T-cell (primary cell): ENCODE measurements at regions of chr1 and their contacts with region 1.

Region 1: DNA sequence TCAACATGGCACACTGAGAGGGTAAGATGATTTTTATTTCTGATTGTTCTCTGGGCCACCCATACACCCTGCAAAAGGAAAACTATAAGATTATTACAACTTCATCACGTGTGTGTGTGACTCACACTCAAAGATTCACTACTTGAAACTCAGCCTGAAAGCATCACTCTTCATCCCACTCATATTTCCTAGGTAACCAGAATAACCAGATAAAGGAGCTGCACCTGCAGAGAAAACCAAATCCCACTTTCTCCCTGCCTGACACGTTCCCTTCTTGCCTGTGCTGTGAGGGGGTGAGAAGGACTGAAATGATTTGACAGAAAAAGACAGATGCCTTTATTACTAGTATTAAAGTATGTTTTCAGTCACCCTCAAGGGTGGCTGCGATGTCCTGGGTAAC is 131.6 kb downstream of the TGFBR3 start:
- DNase-seq: no peak
- ATAC-seq: peak in 1 of 4 experiments; percentile 59
- H3K4me3 ChIP-seq: no peak overlapping the region
- H3K4me3 Mint-ChIP-seq: no peak overlapping the region
- H3K27ac ChIP-seq: peak overlapping the region; percentile 28
- H3K27ac Mint-ChIP-seq: peak overlapping the region; percentile 29 to 56
- H3K4me1 ChIP-seq: peaks cover 0 to 14% of the 10 kb centered on the region in 2 experiments
- H3K4me1 Mint-ChIP-seq: peaks cover 13 to 30% (median 29%) of the 10 kb centered on the region in 3 donors
- H3K27me3 ChIP-seq: no peaks in the 10 kb centered on the region
- H3K27me3 Mint-ChIP-seq: no peaks in the 10 kb centered on the region

Region 2: GRCh38 chr1:91768787-91769725 is 14.7 kb after region 1 on chr1:
- CTCF ChIA-PET with region 1: interaction called in 1 of 2 experiments, 8 read pairs
- POLR2A ChIA-PET with region 1: interaction called in 1 of 2 experiments, 19 read pairs
- DNase-seq: no peak
- ATAC-seq: no peak
- H3K4me3 ChIP-seq: no peak overlapping the region
- H3K4me3 Mint-ChIP-seq: no peak overlapping the region
- H3K27ac ChIP-seq: no peak overlapping the region
- H3K27ac Mint-ChIP-seq: no peak overlapping the region
- H3K4me1 ChIP-seq: peaks cover 0 to 6% of the 10 kb centered on the region in 2 experiments
- H3K4me1 Mint-ChIP-seq: peaks cover 0 to 21% (median 9%) of the 10 kb centered on the region in 3 donors
- H3K27me3 ChIP-seq: no peaks in the 10 kb centered on the region
- H3K27me3 Mint-ChIP-seq: no peaks in the 10 kb centered on the region

Region 3: DNA sequence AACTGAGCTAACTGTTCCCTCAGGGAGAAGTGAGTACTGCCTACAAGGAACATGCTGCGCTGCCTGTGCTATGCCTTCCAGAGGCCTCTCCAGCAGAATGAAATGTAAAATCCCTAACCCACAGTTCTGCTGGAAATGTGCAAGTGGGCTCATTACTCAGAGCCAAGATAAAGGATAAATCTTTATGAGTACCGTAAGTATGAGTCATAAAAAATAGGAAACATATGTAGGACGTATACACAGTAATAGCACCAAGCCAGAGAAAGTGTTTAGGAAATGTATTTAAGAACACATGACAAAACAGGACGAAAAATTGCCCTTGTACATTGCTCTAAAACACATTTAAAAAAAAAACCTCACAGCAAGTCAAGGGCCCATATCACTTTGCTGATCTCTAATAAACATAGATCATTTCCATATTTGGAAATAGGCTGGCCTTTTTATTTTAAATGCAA is 27.1 kb after region 1 on chr1:
- CTCF ChIA-PET with region 1: no interaction called
- POLR2A ChIA-PET with region 1: interaction called, 10 to 15 read pairs
- DNase-seq: no peak
- ATAC-seq: no peak
- H3K4me3 ChIP-seq: no peak overlapping the region
- H3K4me3 Mint-ChIP-seq: no peak overlapping the region
- H3K27ac ChIP-seq: no peak overlapping the region
- H3K27ac Mint-ChIP-seq: no peak overlapping the region
- H3K4me1 ChIP-seq: peaks cover 0 to 3% of the 10 kb centered on the region in 2 experiments
- H3K4me1 Mint-ChIP-seq: peaks cover 0 to 31% (median 6%) of the 10 kb centered on the region in 3 donors
- H3K27me3 ChIP-seq: no peaks in the 10 kb centered on the region
- H3K27me3 Mint-ChIP-seq: no peaks in the 10 kb centered on the region